GM12878 (cell line): ENCODE measurements at regions of chr3 and their contacts with region 1.

Region 1: DNA sequence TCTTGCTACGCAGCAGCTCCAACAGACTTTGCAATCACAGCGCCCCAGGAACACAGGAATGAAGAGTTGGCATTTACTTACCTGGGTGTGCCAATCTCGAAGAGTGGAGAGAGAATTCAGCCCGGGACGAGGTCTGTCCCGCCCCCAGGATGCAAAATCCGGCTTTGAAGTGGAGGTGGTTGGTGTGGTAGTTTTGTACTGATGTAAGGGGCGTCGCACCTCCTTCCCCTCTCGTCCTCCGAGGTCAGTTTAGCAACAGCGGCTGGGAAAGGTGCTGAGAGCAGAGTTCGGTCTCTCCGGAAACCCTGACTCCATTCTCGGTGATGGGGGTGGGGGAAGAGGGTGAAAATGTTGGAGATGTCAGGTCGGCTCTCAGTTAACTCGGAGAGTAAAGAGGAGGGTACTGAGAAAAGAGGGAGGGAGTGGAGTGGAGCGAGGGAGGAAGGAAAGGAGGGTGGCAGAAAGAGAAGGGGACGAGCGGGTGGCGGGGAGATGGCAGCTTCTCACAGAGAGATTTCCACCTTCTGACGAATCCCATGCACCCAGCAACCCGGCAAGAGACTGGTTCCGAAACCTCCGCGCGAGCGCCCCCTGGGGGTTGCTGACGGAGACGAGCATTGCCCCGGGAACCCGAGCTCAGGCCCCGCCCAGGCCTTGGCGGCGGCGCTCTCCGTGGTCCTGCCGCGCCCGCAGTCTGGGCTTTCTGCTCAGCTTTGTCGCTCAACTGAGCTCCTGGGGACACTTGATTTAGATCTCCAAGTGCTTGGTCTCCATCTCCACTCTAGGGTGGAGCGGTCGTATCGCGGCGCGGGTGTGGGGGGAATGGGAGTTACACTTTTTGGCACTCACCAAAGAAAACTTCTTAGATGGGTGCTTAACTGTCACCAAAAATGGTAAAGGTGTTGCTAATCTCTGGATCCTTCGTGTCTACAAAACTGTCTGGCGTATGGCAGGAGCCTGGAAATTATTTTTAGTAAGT is at the start of gene CPNE4:
- DNase-seq: no peak
- ATAC-seq: peak; percentile 98
- H3K4me3 ChIP-seq: no peak within 1 kb of the TSS
- H3K27ac ChIP-seq: no peak within 1 kb of the TSS
- H3K4me1 ChIP-seq: no peaks in the 10 kb centered on the region
- H3K27me3 ChIP-seq: peaks cover 3 to 11% of the 10 kb centered on the region in 2 experiments
- CTCF ChIP-seq: peak; percentile 72 to 73 (median 72)
- EP300 ChIP-seq: no peak
- POLR2A ChIP-seq: no peak
- RAD21 ChIP-seq: peak; percentile 32; the same call in 1 of the 2 replicates
- polyA plus RNA-seq, gene CPNE4: 0.19 to 0.75 TPM

Region 2: DNA sequence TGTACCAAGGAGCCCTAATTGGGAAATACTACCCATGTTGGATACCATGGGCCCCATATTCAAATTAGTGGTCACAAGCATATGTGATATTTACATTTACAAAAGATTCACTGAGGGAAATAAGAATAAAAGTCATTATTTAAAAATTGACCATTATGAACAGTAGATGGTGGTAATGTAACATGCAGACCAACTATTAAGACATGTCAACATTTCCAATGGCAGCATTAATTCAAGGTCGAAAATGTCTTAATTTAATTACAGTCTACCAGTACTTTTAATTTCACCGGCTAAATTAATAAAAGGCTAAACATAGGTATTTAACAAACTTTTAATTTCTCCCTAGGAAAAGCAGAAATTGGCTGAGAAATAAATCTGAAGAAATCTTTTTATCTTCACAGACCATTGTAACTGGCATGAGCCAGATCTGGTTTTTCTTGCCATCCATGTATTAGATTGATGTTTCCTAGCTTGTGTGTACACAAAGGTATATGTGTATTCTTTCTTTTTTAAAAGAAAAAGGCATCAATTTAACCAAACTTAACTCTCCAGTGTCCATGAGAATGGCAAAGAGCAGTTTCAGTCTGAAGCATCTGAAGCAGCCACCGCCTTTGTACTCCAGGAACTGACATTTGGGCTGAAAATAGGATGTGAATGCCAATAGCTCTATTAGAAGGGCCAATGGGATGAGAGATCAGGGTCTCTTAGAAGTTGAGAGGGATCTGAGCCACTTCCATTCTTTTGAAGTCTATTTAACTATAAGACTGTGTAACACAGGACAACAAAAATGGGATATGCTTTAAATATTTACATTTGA is 981.5 kb before region 1 on chr3:
- CTCF ChIA-PET with region 1: no interaction called
- POLR2A ChIA-PET with region 1: no interaction called
- RAD21 ChIA-PET with region 1: no interaction called
- SMC1A ChIA-PET with region 1: no interaction called
- in situ Hi-C with region 1: no loop called
- intact Hi-C with region 1: loop called (anchors 5 kb)
- DNase-seq: no peak
- ATAC-seq: no peak
- H3K4me3 ChIP-seq: no peak overlapping the region
- H3K27ac ChIP-seq: no peak overlapping the region
- H3K4me1 ChIP-seq: no peaks in the 10 kb centered on the region
- H3K27me3 ChIP-seq: no peaks in the 10 kb centered on the region
- CTCF ChIP-seq: peak in 1 of 3 experiments; percentile 29; a peak in 2 of 6 replicates
- EP300 ChIP-seq: no peak
- POLR2A ChIP-seq: no peak
- RAD21 ChIP-seq: peak; percentile 51

Region 3: GRCh38 chr3:131840156-131840797 is 194.5 kb before region 1 on chr3:
- CTCF ChIA-PET with region 1: no interaction called
- POLR2A ChIA-PET with region 1: no interaction called
- RAD21 ChIA-PET with region 1: no interaction called
- SMC1A ChIA-PET with region 1: no interaction called
- in situ Hi-C with region 1: no loop called
- intact Hi-C with region 1: no loop called
- DNase-seq: no peak
- ATAC-seq: no peak
- H3K4me3 ChIP-seq: no peak overlapping the region
- H3K27ac ChIP-seq: no peak overlapping the region
- H3K4me1 ChIP-seq: no peaks in the 10 kb centered on the region
- H3K27me3 ChIP-seq: no peaks in the 10 kb centered on the region
- CTCF ChIP-seq: no peak
- EP300 ChIP-seq: no peak
- POLR2A ChIP-seq: no peak
- RAD21 ChIP-seq: no peak

Region 4: GRCh38 chr3:132016061-132017041 is 18.4 kb before region 1 on chr3:
- CTCF ChIA-PET with region 1: interaction called, 11 read pairs
- POLR2A ChIA-PET with region 1: no interaction called
- RAD21 ChIA-PET with region 1: interaction called, 3 read pairs
- SMC1A ChIA-PET with region 1: interaction called, 4 read pairs
- in situ Hi-C with region 1: no loop called
- intact Hi-C with region 1: no loop called
- DNase-seq: no peak
- ATAC-seq: no peak
- H3K4me3 ChIP-seq: no peak overlapping the region
- H3K27ac ChIP-seq: no peak overlapping the region
- H3K4me1 ChIP-seq: no peaks in the 10 kb centered on the region
- H3K27me3 ChIP-seq: no peaks in the 10 kb centered on the region; a peak in 1 of 4 replicates
- CTCF ChIP-seq: no peak
- EP300 ChIP-seq: no peak
- POLR2A ChIP-seq: no peak
- RAD21 ChIP-seq: no peak

Region 5: GRCh38 chr3:132135628-132136333 is 101.0 kb after region 1 on chr3:
- CTCF ChIA-PET with region 1: no interaction called
- POLR2A ChIA-PET with region 1: no interaction called
- RAD21 ChIA-PET with region 1: no interaction called
- SMC1A ChIA-PET with region 1: no interaction called
- in situ Hi-C with region 1: no loop called
- intact Hi-C with region 1: no loop called
- DNase-seq: no peak
- ATAC-seq: no peak
- H3K4me3 ChIP-seq: no peak overlapping the region
- H3K27ac ChIP-seq: no peak overlapping the region
- H3K4me1 ChIP-seq: no peaks in the 10 kb centered on the region
- H3K27me3 ChIP-seq: no peaks in the 10 kb centered on the region
- CTCF ChIP-seq: no peak
- EP300 ChIP-seq: no peak
- POLR2A ChIP-seq: no peak
- RAD21 ChIP-seq: no peak

Region 6: DNA sequence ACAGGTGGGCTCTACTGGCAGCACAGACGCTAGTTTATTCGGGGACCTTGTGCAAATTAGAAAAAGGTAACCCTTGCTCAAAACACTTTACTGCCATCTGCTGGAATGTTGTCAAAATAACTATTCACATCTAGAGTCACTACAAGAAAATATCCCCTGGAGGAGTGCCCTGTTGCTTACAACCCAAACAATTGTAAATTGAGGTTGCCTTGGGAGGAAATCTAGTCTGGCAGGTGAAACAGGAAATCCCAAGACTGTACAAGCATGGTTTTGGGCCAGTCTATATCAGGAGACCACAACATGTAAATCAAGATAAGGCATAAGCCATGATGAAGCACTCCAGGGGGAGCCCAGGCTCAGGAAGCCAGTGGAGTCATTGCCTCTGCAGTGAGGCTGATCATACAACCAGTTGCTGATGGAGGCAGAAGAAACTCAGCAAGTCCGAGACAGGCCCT is 145.6 kb after region 1 on chr3:
- CTCF ChIA-PET with region 1: interaction called, 16 read pairs
- POLR2A ChIA-PET with region 1: no interaction called
- RAD21 ChIA-PET with region 1: no interaction called
- SMC1A ChIA-PET with region 1: interaction called, 6 read pairs
- in situ Hi-C with region 1: no loop called
- intact Hi-C with region 1: loop called (anchors 2 kb)
- DNase-seq: peak; percentile 5
- ATAC-seq: peak; percentile 84
- H3K4me3 ChIP-seq: no peak overlapping the region
- H3K27ac ChIP-seq: no peak overlapping the region
- H3K4me1 ChIP-seq: no peaks in the 10 kb centered on the region
- H3K27me3 ChIP-seq: no peaks in the 10 kb centered on the region; a peak in 1 of 4 replicates
- CTCF ChIP-seq: peak; percentile 38 to 61 (median 46); a peak in 5 of 6 replicates
- EP300 ChIP-seq: no peak
- POLR2A ChIP-seq: no peak
- RAD21 ChIP-seq: peak; percentile 70

Region 7: DNA sequence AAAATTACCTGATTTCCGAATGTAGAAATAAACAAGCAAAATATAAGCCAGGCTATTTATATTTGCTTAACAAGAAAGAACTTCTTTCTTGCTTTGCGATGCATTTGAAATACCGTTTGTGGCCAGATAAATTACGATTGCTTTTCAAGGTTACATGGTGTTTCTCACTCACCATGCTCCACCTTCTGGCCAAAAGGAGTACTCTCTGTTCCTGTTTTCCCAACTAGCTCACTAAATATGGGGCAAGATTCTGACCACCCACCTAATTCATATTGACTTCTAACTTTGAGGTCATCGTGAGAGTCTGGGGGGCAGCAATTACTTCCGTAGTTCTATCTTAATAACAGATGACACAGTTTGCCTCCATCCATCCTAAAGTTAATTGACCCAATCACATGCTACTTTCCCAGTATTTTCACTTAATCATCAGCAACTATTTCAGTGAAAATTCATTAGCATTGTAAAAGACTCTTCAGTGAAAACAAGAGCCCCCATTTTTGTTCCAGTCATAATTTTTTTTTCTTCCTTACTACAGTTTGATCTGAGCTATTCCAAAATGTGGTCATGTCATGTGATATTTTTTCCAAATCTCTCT is 308.3 kb after region 1 on chr3:
- CTCF ChIA-PET with region 1: interaction called, 13 read pairs
- POLR2A ChIA-PET with region 1: no interaction called
- RAD21 ChIA-PET with region 1: interaction called, 6 read pairs
- SMC1A ChIA-PET with region 1: no interaction called
- in situ Hi-C with region 1: no loop called
- intact Hi-C with region 1: loop called (anchors 10 kb)
- DNase-seq: no peak
- ATAC-seq: peak; percentile 80
- H3K4me3 ChIP-seq: no peak overlapping the region
- H3K27ac ChIP-seq: no peak overlapping the region
- H3K4me1 ChIP-seq: no peaks in the 10 kb centered on the region
- H3K27me3 ChIP-seq: no peaks in the 10 kb centered on the region
- CTCF ChIP-seq: peak; percentile 69 to 79 (median 75)
- EP300 ChIP-seq: no peak
- POLR2A ChIP-seq: no peak
- RAD21 ChIP-seq: peak; percentile 65

Region 8: DNA sequence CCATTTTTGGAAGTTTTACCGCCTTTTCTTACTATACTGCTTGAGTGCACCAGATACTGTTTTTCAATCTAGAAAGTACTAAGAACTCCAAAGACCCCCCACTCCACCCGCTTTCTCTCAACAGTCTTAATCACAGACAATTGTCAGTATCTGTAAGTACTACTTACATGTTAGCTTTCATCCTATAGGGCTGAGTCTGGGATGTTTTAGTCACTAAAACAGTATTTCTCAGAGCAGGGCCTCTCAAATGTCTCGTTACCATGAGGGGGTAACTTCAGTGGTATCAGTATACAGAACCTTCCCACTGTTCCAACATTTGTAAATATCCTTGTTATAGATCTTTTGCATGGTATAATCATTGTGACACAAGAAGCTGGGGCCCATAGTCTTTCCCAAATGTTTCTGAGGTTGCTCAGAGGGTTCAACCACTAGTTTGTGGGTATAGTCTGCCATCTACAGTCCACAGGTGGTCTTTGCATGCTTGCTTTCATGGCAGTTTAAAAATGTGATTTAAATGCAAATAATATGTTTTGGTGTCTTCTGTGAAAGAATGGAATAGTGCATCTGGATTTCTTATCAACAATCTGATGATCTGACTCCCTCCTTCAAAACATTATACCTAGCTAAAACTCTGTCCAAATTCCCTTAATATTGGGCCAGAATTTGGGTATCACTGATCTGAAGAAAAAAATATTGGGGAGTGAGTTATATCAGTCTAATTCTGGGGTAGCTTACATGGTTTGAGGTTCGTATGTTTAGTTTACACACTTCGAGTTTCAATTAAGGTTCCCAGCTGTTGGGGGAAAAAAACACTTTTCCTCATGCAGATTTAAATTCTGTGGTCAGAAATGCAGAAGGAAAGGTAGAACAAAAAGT is 364.5 kb after region 1 on chr3:
- CTCF ChIA-PET with region 1: interaction called, 4 read pairs
- POLR2A ChIA-PET with region 1: no interaction called
- RAD21 ChIA-PET with region 1: no interaction called
- SMC1A ChIA-PET with region 1: interaction called, 4 read pairs
- in situ Hi-C with region 1: no loop called
- intact Hi-C with region 1: loop called (anchors 10 kb)
- DNase-seq: no peak
- ATAC-seq: peak; percentile 82
- H3K4me3 ChIP-seq: no peak overlapping the region
- H3K27ac ChIP-seq: no peak overlapping the region
- H3K4me1 ChIP-seq: no peaks in the 10 kb centered on the region
- H3K27me3 ChIP-seq: no peaks in the 10 kb centered on the region; a peak in 1 of 4 replicates
- CTCF ChIP-seq: peak; percentile 77 to 92 (median 83)
- EP300 ChIP-seq: no peak
- POLR2A ChIP-seq: no peak
- RAD21 ChIP-seq: peak; percentile 95

Region 9: GRCh38 chr3:132587401-132587800 is 552.6 kb after region 1 on chr3:
- CTCF ChIA-PET with region 1: no interaction called
- POLR2A ChIA-PET with region 1: no interaction called
- RAD21 ChIA-PET with region 1: no interaction called
- SMC1A ChIA-PET with region 1: no interaction called
- in situ Hi-C with region 1: no loop called
- intact Hi-C with region 1: no loop called
- DNase-seq: no peak
- ATAC-seq: no peak
- H3K4me3 ChIP-seq: no peak overlapping the region
- H3K27ac ChIP-seq: no peak overlapping the region
- H3K4me1 ChIP-seq: no peaks in the 10 kb centered on the region
- H3K27me3 ChIP-seq: no peaks in the 10 kb centered on the region
- CTCF ChIP-seq: no peak
- EP300 ChIP-seq: no peak
- POLR2A ChIP-seq: no peak
- RAD21 ChIP-seq: no peak